Calu3 (cell line): ENCODE measurements at regions of chr5 and their contacts with region 1.

Region 1: GRCh38 chr5:74974451-74975091 is 77.8 kb downstream of the GCNT4 start:
- DNase-seq: no peak
- H3K4me3 Mint-ChIP-seq: no peak overlapping the region
- H3K27ac Mint-ChIP-seq: no peak overlapping the region
- H3K4me1 Mint-ChIP-seq: peaks cover 41% of the 10 kb centered on the region
- H3K27me3 Mint-ChIP-seq: no peaks in the 10 kb centered on the region
- CTCF ChIP-seq: no peak

Region 2: DNA sequence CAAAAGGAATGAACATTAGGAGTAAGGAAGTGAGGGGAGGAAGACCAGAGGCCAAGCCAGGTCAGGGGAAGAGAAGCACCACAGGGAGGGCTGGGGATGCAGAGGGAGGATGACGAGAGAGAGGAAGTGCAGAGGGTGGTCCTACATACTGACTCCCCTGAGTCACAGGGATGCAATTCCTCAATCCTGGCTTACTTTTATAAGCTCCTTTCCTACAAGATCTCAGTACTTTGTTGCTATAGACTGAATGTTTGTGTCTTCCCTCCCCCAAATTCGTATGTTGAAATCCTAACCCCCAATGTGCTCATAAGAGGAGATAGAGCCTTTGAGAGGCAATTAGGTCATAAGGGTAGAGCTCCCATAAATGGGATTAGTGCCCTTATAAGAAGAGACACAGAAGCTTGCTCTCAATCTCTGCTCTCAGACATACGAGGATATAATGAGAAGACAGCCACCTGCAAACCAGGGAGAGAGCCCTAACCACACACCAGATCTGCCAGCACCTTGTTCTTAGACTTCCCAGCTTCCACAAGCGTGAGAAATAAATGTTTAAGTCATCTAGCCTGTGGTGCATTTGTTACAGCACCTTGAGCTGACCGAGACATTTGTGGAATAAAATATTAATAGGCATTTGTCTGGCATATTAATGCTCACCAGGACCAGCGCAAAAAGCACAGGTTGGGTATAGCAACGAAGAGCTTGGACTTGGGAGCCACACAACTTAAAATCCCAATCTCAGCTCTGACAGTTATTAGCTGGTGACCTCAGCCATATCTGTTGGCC is 44.4 kb after region 1 on chr5:
- CTCF ChIA-PET with region 1: no interaction called
- intact Hi-C with region 1: loop called (anchors 5 kb)
- DNase-seq: no peak
- H3K4me3 Mint-ChIP-seq: no peak overlapping the region
- H3K27ac Mint-ChIP-seq: peak overlapping the region; percentile 22
- H3K4me1 Mint-ChIP-seq: peaks cover 56% of the 10 kb centered on the region
- H3K27me3 Mint-ChIP-seq: no peaks in the 10 kb centered on the region
- CTCF ChIP-seq: no peak

Region 3: DNA sequence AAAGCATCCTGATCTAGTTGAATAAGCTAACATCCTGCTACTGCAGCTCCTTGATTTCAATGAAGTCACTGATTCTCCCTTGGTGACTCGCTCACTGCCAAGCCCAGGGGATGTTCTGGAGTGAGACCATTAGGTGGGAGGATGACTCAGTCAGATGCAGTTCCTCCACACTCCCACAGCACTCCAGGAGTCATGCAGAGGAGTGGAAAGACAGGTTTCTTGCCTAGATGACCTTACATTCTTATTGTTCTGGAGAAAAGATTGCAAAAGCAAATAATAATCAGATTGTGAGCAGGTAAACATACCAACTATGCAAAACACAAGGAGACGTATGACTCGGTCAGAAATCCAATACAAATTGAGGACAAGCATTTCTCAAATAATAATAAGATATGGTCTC is 62.6 kb after region 1 on chr5:
- CTCF ChIA-PET with region 1: interaction called, 3 read pairs
- intact Hi-C with region 1: loop called (anchors 5 kb)
- DNase-seq: peak; percentile 90
- H3K4me3 Mint-ChIP-seq: peak overlapping the region; percentile 22
- H3K27ac Mint-ChIP-seq: peak overlapping the region; percentile 90
- H3K4me1 Mint-ChIP-seq: peaks cover 64% of the 10 kb centered on the region
- H3K27me3 Mint-ChIP-seq: no peaks in the 10 kb centered on the region
- CTCF ChIP-seq: no peak